ENCODE measurements at regions of chr4 and their contacts with region 1.

Region 1: GRCh38 chr4:81214881-81215868 is at the start of gene PRKG2:
- DNase-seq: peak; percentile 83 to 92 (median 85)
- H3K4me3 ChIP-seq: peak within 1 kb of the TSS; percentile 59 to 96 (median 88)
- H3K27ac ChIP-seq: peak within 1 kb of the TSS; percentile 72 to 85
- H3K4me1 ChIP-seq: peaks cover 2 to 51% (median 14%) of the 10 kb centered on the region in 4 experiments
- H3K27me3 ChIP-seq: peaks cover 0 to 10% (median 0%) of the 10 kb centered on the region in 5 experiments

Region 2: DNA sequence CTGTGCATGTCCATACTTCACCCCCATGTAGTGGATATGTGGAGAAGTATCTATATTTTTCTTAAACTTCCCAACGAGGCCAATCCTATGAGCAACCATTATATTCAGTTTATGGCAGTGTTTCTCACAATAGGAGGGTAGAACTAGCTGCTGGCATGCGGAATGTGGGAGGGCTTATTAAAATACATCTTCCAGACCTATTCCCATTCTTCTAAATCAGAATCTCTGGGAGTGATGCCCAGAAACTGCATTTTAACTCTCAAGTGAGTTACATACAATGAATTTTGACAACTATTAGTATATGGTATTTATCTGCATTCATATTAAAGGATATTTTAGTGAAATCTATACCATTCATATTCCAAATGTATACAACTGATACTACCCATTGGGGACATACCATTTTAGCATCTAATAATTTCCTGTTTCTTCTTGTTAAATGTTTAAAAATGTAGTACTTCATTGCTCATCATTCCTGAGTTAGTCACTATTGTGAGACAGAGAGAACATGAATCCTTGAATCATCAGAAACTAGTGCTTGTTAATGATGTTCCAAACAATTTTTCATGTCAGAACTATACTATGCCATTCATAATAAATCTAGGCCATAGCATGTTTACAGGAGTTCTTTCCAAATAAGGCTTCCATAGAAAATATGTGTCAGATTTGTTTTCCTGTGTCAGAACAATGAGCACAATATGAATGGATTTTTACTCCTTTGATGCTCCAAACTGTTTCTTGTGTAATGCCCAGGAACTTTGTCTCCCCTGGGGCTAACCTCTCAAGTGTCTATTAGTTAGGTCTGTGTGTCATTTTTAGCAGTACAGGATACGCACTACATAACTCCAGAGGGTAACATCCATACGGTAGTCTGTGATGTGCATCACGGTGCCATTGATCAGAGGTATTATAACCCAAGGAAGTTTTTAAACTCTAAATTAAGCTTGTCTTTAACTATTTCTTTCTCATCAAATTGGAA is 383.5 kb before region 1 on chr4:
- CTCF ChIA-PET with region 1: no interaction called
- POLR2A ChIA-PET with region 1: no interaction called
- DNase-seq: no peak
- H3K4me3 ChIP-seq: no peak overlapping the region
- H3K27ac ChIP-seq: no peak overlapping the region
- H3K4me1 ChIP-seq: no peaks in the 10 kb centered on the region
- H3K27me3 ChIP-seq: no peaks in the 10 kb centered on the region

Region 3: GRCh38 chr4:81204571-81204970 is 10.6 kb before region 1 on chr4:
- CTCF ChIA-PET with region 1: interaction called, 15 read pairs
- POLR2A ChIA-PET with region 1: no interaction called
- DNase-seq: peak in 2 of 3 donors; percentile 68 to 80
- H3K4me3 ChIP-seq: peak overlapping the region in 4 of 7 experiments; percentile 12 to 58 (median 32)
- H3K27ac ChIP-seq: peak overlapping the region in 1 of 2 experiments; percentile 43
- H3K4me1 ChIP-seq: peaks cover 0 to 60% (median 6%) of the 10 kb centered on the region in 4 experiments
- H3K27me3 ChIP-seq: no peaks in the 10 kb centered on the region

Region 4: DNA sequence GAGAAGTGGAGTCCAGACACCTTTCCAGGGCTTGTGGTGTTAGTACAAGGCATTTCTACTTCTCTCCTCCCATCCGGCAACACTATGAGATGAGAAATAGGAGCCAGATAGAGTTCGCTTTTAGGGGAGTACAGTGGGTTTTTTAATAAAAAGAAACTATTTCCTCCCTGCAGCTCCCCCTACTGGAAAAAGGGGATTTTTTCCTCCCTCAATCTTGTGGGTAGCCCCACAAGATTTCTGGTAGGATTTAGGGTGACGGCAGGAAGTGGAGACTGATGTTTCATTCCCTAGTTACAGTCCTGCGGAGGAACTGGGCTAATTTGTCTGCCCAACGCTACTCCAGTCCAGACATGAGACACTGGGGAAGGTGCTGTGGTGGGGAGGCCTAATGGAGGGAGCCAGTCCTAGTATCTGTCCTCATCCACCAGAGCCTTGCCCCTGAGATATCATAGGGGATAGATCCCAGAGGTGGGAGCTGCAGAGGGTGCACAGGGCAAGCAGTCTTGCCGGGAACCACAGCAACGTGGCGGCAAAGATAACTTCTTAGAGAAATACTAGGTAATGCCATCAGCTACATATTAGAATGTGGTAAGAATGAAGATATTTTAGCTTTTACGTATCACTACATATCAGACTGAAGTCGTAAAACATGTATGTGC is 45.4 kb after region 1 on chr4:
- CTCF ChIA-PET with region 1: interaction called, 48 read pairs
- POLR2A ChIA-PET with region 1: no interaction called
- DNase-seq: peak; percentile 51 to 75 (median 54)
- H3K4me3 ChIP-seq: no peak overlapping the region
- H3K27ac ChIP-seq: peak overlapping the region; percentile 22 to 56
- H3K4me1 ChIP-seq: peaks cover 0 to 47% (median 22%) of the 10 kb centered on the region in 4 experiments
- H3K27me3 ChIP-seq: no peaks in the 10 kb centered on the region

Region 5: DNA sequence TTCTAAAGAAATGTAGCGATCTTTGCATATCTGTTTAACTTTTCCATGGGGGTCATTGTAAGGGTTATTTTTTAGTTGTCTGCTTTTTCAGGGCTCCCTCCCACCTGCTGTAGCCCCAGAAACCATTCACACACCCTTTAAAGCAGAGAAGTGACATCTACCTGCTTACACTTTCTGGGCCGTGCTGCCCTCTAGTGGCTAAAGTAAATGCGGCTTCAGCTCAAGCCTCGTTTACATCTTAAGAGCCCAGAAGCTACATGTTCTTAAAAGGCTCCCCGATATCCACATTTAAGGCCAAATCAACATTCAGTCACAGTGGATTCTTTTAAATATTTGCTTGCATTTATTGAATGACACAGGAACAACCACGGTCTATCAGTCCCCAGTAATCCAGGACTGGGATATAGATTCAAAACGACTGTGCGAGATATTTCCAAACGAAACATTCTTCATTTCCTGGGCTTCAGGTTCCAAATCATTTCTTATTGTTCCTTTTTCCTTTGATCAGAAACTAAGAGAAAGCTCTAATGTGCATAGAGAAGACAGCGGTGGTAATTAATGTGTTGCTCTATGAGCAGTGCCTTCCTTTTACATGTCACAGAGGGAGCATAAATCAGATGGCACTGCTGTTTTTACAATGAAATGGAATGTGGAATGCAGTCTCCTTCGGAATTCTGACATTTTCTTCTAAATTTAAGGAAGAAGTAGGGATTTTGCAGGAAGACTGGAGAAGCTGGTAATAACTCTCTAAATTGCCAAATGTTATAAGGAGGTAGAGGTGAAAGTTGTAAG is 136.7 kb after region 1 on chr4:
- CTCF ChIA-PET with region 1: interaction called, 46 read pairs
- POLR2A ChIA-PET with region 1: no interaction called
- DNase-seq: peak; percentile 88 to 91 (median 88)
- H3K4me3 ChIP-seq: peak overlapping the region in 2 of 7 experiments; percentile 40 to 48
- H3K27ac ChIP-seq: no peak overlapping the region
- H3K4me1 ChIP-seq: peaks cover 0 to 13% (median 6%) of the 10 kb centered on the region in 4 experiments
- H3K27me3 ChIP-seq: no peaks in the 10 kb centered on the region

Measured in common myeloid progenitor, CD34-positive (primary cell).